GM12878 (cell line): ENCODE measurements at regions of chr5 and their contacts with region 1.

Region 1: DNA sequence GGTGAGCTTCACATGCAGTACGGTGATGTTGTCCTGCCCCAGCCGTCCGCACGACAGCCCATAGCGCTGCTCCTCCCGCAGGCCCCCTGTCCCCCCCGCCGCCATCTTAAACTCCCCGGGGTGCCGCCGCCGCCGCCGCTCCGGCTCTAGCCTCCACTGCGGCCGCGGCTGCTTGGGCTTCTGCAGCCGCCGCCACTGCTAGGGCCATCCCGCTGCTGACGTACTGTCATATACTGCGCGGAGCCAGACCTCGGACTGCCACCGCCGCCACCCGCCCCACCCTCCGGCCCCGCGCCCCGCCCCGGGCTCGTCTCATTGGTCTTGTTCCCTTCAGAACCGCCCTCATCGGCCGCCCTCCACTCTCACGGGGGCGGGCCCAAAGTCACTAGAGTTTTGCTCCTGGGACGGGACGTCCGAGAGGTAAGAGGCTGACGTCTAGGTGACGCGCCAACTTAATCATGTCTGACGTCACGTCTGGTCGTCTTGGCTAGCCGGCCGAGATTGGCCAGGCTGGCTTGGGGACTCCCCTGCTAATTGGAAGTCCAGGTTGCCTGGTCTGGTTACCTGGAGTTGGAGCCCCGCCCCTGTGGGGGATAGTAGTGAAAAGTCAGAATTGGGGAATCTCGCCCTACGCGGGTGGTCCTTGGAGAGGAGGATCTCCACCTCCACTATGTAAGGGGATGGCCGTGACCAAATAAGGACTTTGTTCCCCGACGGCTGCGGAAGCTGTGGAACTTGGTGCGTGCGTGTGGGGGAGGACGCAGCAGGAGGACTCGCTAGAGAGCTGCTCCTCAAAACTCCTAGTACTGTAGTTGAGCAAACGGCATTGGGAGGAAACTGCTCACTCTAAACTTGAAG is at the start of gene ELL2:
- DNase-seq: peak; percentile 89
- ATAC-seq: peak; percentile 78
- H3K4me3 ChIP-seq: peak within 1 kb of the TSS; percentile 86
- H3K27ac ChIP-seq: peak within 1 kb of the TSS; percentile 95
- H3K4me1 ChIP-seq: 0 out of 2 replicates have a peak, but pooled peaks cover 3% of the 10 kb centered on the region
- H3K27me3 ChIP-seq: no peaks in the 10 kb centered on the region
- CTCF ChIP-seq: no peak
- EP300 ChIP-seq: no peak
- POLR2A ChIP-seq: peak; percentile 79
- RAD21 ChIP-seq: no peak
- polyA plus RNA-seq, gene ELL2: 24.2 to 34.4 TPM

Region 2: DNA sequence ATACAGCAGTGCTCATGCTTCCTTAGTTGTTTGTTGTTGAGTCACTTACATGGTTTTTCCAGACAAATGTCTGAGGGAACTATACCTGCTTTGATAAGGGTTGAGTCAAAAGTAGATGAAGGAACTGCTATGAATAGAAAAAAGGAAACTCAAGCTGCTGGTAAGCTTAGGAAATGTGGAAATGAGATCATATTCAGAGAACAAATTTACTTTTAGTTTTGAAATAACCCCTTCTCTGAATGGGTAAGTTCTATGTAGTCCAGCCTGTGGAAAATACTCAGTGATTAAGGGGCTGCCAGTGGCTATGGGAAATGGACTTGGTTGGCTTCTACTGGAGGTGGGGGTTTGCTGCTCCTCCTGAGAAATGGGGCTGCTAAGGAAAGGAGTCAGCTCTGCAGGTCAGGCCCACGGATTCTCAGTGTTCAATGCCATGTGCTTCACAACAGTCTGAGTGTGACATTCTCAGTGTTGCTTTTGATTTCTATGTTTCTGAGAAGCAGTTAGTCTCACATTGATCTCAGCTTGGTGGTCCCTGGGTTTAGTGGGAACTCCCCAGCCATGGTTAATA is 91.7 kb before region 1 on chr5:
- CTCF ChIA-PET with region 1: interaction called, 3 read pairs
- POLR2A ChIA-PET with region 1: interaction called, 20 read pairs
- RAD21 ChIA-PET with region 1: interaction called, 16 read pairs
- SMC1A ChIA-PET with region 1: interaction called, 34 read pairs
- in situ Hi-C with region 1: no loop called
- intact Hi-C with region 1: loop called (anchors 2 kb)
- DNase-seq: peak; percentile 65
- ATAC-seq: peak; percentile 84
- H3K4me3 ChIP-seq: peak overlapping the region; percentile 54; the same call in 1 of the 2 replicates
- H3K27ac ChIP-seq: peak overlapping the region; percentile 82
- H3K4me1 ChIP-seq: peaks cover 24% of the 10 kb centered on the region
- H3K27me3 ChIP-seq: no peaks in the 10 kb centered on the region
- CTCF ChIP-seq: no peak
- EP300 ChIP-seq: no peak; a peak in 1 of 4 replicates
- POLR2A ChIP-seq: 0 out of 2 replicates have a peak, but pooled peaks have one; percentile 32
- RAD21 ChIP-seq: no peak

Region 3: GRCh38 chr5:95915999-95916686 is 45.7 kb before region 1 on chr5:
- CTCF ChIA-PET with region 1: interaction called, 7 read pairs
- POLR2A ChIA-PET with region 1: interaction called, 4 read pairs
- RAD21 ChIA-PET with region 1: interaction called, 29 read pairs
- SMC1A ChIA-PET with region 1: interaction called, 16 read pairs
- in situ Hi-C with region 1: no loop called
- intact Hi-C with region 1: no loop called
- DNase-seq: no peak
- ATAC-seq: peak; percentile 79
- H3K4me3 ChIP-seq: no peak overlapping the region
- H3K27ac ChIP-seq: peak overlapping the region; percentile 20; the same call in 1 of the 2 replicates
- H3K4me1 ChIP-seq: peaks cover 38% of the 10 kb centered on the region
- H3K27me3 ChIP-seq: no peaks in the 10 kb centered on the region
- CTCF ChIP-seq: no peak
- EP300 ChIP-seq: no peak
- POLR2A ChIP-seq: no peak
- RAD21 ChIP-seq: no peak

Region 4: DNA sequence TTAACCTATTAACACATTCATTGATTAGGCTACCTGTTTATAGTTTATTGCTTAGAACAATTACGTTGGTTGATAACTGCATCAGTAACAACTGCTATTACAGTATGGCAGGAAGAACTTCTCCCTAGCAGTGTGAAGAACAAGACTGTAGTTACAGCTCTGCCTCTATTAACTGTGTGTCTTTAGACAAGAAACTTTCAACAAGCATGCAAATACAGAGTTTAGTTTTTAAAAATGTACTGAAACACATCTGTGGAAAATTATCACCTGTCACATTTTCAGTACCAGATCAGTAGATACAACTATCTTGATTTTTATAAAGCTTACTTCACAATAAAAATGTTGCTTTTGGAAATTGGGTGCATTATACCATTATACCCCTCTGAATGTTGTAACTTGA is 22.4 kb before region 1 on chr5:
- CTCF ChIA-PET with region 1: interaction called, 33 read pairs
- POLR2A ChIA-PET with region 1: interaction called, 8 read pairs
- RAD21 ChIA-PET with region 1: interaction called, 13 read pairs
- SMC1A ChIA-PET with region 1: interaction called, 51 read pairs
- in situ Hi-C with region 1: no loop called
- intact Hi-C with region 1: no loop called
- DNase-seq: no peak
- ATAC-seq: peak; percentile 53
- H3K4me3 ChIP-seq: 0 out of 2 replicates have a peak overlapping the region, but pooled peaks have one; percentile 0
- H3K27ac ChIP-seq: peak overlapping the region; percentile 62
- H3K4me1 ChIP-seq: peaks cover 26% of the 10 kb centered on the region
- H3K27me3 ChIP-seq: no peaks in the 10 kb centered on the region
- CTCF ChIP-seq: no peak
- EP300 ChIP-seq: no peak
- POLR2A ChIP-seq: no peak
- RAD21 ChIP-seq: no peak

Region 5: GRCh38 chr5:96094904-96095303 is 133.1 kb after region 1 on chr5:
- CTCF ChIA-PET with region 1: no interaction called
- POLR2A ChIA-PET with region 1: no interaction called
- RAD21 ChIA-PET with region 1: no interaction called
- SMC1A ChIA-PET with region 1: no interaction called
- in situ Hi-C with region 1: no loop called
- intact Hi-C with region 1: no loop called
- DNase-seq: no peak
- ATAC-seq: no peak
- H3K4me3 ChIP-seq: no peak overlapping the region
- H3K27ac ChIP-seq: no peak overlapping the region
- H3K4me1 ChIP-seq: no peaks in the 10 kb centered on the region
- H3K27me3 ChIP-seq: no peaks in the 10 kb centered on the region
- CTCF ChIP-seq: no peak
- EP300 ChIP-seq: no peak
- POLR2A ChIP-seq: no peak
- RAD21 ChIP-seq: no peak

Region 6: GRCh38 chr5:96279801-96280542 is 318.1 kb after region 1 on chr5:
- CTCF ChIA-PET with region 1: no interaction called
- POLR2A ChIA-PET with region 1: no interaction called
- RAD21 ChIA-PET with region 1: no interaction called
- SMC1A ChIA-PET with region 1: no interaction called
- in situ Hi-C with region 1: no loop called
- intact Hi-C with region 1: loop called (anchors 1 kb)
- DNase-seq: peak; percentile 39
- ATAC-seq: peak; percentile 92
- H3K4me3 ChIP-seq: no peak overlapping the region
- H3K27ac ChIP-seq: 0 out of 2 replicates have a peak overlapping the region, but pooled peaks have one; percentile 15
- H3K4me1 ChIP-seq: peaks cover 11% of the 10 kb centered on the region; the same call in 1 of the 2 replicates
- H3K27me3 ChIP-seq: no peaks in the 10 kb centered on the region
- CTCF ChIP-seq: no peak
- EP300 ChIP-seq: peak in 1 of 2 experiments; percentile 74; a peak in 1 of 4 replicates
- POLR2A ChIP-seq: no peak
- RAD21 ChIP-seq: no peak